CD8-positive, alpha-beta T cell (primary cell): ENCODE measurements at regions of chr7 and their contacts with region 1.

Region 1: DNA sequence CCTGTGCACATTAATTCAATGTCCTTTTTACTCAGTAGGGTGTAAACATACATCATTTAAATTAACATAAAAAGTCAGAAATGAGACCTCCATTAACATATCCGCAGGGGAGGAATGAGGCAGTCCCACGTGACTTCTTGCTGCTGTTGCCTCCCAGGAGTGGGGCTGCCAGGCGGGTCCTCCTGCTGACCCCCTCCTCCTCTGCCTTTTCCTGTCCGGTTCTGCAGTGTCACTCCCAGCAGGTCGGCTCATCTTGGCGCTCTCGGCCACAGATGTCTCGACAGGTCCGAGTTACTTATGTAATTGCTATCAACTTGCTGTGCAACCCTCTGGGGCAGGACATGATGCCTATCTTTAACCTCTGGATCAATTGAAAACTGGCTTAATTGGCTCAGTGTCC is 329.6 kb downstream of the GALNT17 start:
- DNase-seq: no peak
- ATAC-seq: no peak
- H3K4me3 ChIP-seq: no peak overlapping the region
- H3K4me3 Mint-ChIP-seq: no peak overlapping the region
- H3K27ac ChIP-seq: no peak overlapping the region
- H3K27ac Mint-ChIP-seq: no peak overlapping the region
- H3K4me1 ChIP-seq: no peaks in the 10 kb centered on the region
- H3K4me1 Mint-ChIP-seq: no peaks in the 10 kb centered on the region
- H3K27me3 ChIP-seq: no peaks in the 10 kb centered on the region
- H3K27me3 Mint-ChIP-seq: no peaks in the 10 kb centered on the region
- CTCF ChIP-seq: no peak

Region 2: DNA sequence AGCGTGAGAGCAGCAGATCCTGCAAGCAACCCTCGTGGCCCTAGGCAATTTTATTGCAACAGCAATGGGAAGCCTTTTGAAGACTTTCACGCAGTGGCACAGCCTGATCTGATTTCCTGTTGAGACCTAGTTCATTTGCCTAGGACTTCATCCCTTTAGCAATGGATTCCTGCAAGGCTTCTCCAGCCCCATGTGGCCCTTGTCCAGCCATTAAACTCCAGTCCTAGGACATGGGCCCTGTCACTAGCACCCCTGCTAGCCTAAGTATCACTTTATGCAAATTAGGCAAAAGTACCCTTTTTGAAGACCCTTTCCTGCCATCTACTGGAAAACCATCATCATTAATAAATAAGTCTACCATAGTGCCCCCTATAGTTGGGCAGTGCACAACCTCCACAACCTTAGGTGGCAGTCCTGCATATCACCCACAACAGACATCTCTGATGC is 49.8 kb after region 1 on chr7:
- CTCF ChIA-PET with region 1: no interaction called
- POLR2A ChIA-PET with region 1: no interaction called
- intact Hi-C with region 1: loop called in 1 of 2 experiments (anchors 5 kb)
- DNase-seq: no peak
- ATAC-seq: no peak
- H3K4me3 ChIP-seq: no peak overlapping the region
- H3K4me3 Mint-ChIP-seq: no peak overlapping the region
- H3K27ac ChIP-seq: no peak overlapping the region
- H3K27ac Mint-ChIP-seq: no peak overlapping the region
- H3K4me1 ChIP-seq: no peaks in the 10 kb centered on the region
- H3K4me1 Mint-ChIP-seq: no peaks in the 10 kb centered on the region
- H3K27me3 ChIP-seq: no peaks in the 10 kb centered on the region
- H3K27me3 Mint-ChIP-seq: no peaks in the 10 kb centered on the region
- CTCF ChIP-seq: no peak